Panc1 (cell line): ENCODE measurements at regions of chr2 and their contacts with region 1.

Region 1: DNA sequence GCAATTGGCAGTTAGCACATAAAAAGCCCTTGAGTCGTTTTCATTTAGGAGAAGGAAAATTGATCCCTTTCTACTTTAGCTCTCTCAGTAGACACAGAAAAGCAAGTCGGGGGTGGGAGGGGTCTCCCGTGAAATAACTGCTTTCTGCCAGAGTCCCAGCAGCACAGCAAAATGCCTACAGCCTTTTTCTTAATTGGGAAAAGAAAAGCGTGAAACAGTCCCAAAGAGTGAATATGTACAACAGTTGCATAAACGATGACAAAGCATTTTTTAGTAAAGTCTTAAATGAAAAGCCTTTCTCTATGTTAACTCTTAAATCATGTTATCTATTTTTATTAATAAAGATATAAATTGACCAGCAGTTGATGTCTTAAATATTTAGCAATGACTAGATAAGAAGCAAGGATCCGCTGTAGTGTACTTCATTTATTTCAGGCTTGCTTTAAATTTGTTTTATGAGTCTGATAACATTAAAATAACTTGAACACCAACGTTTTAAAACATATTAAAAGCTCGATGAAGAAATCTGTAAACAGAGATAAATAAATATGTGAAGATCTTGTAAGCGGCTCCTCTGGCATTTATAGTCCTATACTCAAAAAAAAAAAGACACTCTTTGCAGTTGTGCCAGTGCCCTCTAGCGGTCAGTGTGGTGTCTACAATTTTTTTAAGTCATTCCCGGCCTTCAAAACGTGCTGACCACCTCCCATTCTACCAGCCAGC is 42.3 kb upstream of the ATIC start:
- DNase-seq: peak; percentile 47
- ATAC-seq: no peak
- H3K4me3 ChIP-seq: no peak overlapping the region
- H3K27ac ChIP-seq: no peak overlapping the region
- H3K4me1 ChIP-seq: no peaks in the 10 kb centered on the region; the same call in 1 of the 2 replicates
- H3K27me3 ChIP-seq: no peaks in the 10 kb centered on the region
- CTCF ChIP-seq: peak; percentile 90

Region 2: DNA sequence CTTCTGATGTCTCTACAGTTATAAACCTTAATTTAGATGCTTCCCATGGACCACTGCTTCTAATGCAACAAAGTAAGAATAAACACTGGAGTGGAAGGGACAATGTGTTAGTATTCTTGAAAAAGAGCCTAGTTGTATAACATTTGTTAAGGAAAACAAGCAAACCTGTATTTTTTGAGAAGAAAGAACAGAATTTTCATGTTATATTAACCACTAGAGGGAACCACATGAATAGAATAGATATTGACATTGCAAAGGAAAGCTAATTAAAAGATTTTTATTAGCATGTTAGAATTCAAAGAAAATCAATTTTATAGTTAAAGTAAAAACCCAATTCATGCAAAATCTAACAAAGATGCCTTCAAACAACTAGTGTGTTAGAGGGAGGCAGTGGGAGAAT is 308.9 kb before region 1 on chr2:
- CTCF ChIA-PET with region 1: interaction called, 7 read pairs
- POLR2A ChIA-PET with region 1: no interaction called
- in situ Hi-C with region 1: no loop called
- intact Hi-C with region 1: loop called (anchors 10 kb)
- DNase-seq: no peak
- ATAC-seq: no peak
- H3K4me3 ChIP-seq: no peak overlapping the region
- H3K27ac ChIP-seq: no peak overlapping the region
- H3K4me1 ChIP-seq: no peaks in the 10 kb centered on the region
- H3K27me3 ChIP-seq: no peaks in the 10 kb centered on the region
- CTCF ChIP-seq: no peak

Region 3: GRCh38 chr2:215171151-215171550 is 98.4 kb before region 1 on chr2:
- CTCF ChIA-PET with region 1: no interaction called
- POLR2A ChIA-PET with region 1: no interaction called
- in situ Hi-C with region 1: no loop called
- intact Hi-C with region 1: no loop called
- DNase-seq: no peak
- ATAC-seq: no peak
- H3K4me3 ChIP-seq: peak overlapping the region in 1 of 2 experiments; percentile 36; a peak in 2 of 4 replicates
- H3K27ac ChIP-seq: no peak overlapping the region
- H3K4me1 ChIP-seq: no peaks in the 10 kb centered on the region
- H3K27me3 ChIP-seq: no peaks in the 10 kb centered on the region
- CTCF ChIP-seq: no peak

Region 4: DNA sequence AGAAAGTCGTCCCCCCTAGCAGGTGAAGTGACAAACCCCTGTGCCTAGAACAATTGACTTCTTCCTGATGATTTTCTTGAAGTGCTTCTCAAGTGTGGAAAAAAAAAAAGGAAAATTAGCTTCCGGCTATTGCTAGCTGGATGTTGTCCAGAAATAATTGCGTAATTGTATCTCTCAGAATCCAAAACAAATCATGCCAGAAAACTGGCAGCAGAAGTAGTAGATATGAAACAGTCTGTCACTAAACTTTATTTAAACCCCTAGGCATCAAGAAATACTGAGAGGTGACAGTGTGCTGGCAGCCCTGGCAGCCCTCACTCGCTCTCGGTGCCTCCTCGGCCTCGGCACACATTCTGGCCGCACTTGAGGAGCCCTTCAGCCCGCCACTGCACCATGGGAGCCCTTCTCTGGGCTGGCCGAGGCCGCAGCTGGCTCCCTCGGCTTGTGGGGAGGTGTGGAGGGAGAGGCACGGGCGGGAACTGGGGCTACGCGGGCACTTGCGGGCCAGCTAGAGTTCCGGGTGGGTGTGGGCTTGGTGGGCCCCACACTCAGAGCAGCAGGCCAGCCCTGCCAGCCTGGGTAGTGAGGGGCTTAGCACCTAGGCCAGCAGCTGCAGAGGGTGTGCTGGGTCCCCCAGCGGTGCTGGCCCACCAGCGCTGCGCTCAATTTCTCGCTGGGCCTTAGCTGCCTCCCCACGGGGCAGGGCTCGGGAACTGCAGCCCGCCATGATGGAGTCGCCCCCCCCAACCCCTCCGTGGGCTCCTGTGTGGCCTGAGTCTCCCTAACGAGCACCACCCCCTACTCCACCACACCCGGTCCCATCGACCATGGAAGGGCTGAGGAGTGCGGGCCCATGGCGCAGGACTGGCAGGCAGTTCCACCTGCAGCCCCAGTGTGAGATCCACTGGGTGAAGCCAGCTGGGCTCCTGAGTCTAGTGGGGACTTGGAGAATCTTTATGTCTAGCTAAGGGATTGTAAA is 50.7 kb before region 1 on chr2:
- CTCF ChIA-PET with region 1: no interaction called
- POLR2A ChIA-PET with region 1: no interaction called
- in situ Hi-C with region 1: no loop called
- intact Hi-C with region 1: no loop called
- DNase-seq: no peak
- ATAC-seq: no peak
- H3K4me3 ChIP-seq: no peak overlapping the region
- H3K27ac ChIP-seq: no peak overlapping the region
- H3K4me1 ChIP-seq: no peaks in the 10 kb centered on the region
- H3K27me3 ChIP-seq: no peaks in the 10 kb centered on the region
- CTCF ChIP-seq: no peak

Region 5: DNA sequence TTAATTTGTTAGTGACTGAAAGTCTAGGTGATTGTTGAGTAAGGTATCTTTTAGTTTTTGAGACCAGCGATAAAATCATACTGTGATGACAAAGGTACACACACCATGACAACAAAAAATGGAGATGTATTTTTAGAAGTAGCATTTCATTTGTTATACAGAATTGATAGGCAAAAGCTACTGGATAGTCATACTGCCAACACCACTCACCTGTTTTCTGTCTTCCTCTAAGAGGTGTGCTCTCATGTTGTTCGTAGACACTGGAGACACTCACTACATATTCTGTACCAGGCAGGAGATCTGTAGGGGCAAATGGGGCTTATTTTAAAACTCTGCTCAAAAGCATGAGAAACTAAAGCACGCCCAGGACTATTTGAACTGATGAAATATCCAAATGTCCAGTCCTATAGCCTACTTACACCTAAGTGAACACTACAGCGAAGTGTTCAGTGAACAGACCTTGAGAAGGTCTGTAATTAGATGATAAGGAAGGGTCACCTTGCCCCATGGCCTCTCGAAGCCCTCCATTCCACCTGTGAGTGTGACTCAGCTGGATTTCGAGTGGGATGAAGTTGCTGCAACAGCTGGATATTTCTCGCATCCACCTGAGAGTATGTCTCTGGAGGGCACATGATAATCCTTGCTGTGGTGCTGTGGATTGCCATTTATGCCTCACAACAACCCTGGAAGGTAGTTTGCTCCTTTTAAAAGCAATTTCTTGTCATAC is 118.6 kb after region 1 on chr2:
- CTCF ChIA-PET with region 1: no interaction called
- POLR2A ChIA-PET with region 1: interaction called, 16 read pairs
- in situ Hi-C with region 1: no loop called
- intact Hi-C with region 1: no loop called
- DNase-seq: no peak
- ATAC-seq: no peak
- H3K4me3 ChIP-seq: no peak overlapping the region
- H3K27ac ChIP-seq: no peak overlapping the region
- H3K4me1 ChIP-seq: no peaks in the 10 kb centered on the region
- H3K27me3 ChIP-seq: no peaks in the 10 kb centered on the region
- CTCF ChIP-seq: no peak